Psoas muscle (tissue), 8 donors: ENCODE measurements at regions of chr13 and their contacts with region 1.

Region 1: DNA sequence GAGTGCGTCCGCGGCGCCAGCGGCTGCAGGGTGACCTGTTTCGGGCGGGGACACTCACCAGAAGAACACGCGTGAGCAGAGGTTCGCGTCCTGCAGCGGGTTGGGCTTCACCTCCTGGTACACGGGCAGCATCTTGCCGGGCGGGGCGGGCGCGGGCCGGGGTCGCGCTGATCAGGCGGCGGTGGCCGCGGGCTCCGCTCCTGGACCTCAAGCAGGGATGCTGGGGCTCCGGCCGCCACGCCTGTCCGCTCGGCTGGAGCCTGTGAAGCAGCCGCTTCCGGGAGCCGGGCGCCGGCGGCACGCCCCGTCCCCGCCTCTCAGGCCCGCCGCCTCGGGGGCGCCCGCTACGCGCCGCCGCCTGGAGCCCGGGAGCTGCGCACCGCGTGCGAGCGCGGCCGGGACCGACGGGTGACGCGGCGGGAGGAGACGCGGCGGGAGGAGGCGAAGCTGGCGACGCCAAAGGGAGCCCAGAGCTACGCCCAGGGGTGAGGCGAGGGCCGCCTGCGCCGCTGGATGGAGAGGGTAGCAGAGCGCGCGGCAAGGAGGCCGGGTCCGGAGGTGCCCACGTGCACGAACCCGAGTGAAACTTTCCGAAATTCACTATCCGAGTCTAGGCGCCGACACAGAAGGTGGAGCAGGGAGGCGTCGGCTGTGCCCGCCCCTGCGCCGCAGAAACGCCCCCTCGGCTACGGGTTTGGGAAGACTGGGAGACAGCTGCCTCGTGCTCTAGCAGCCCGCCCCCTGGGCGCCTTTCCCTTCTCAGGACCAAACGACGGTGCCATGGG is at the start of gene ABCC4:
- DNase-seq: peak; percentile 69 to 78
- ATAC-seq: peak; percentile 79 to 88 (median 84)
- H3K4me3 ChIP-seq: peak within 1 kb of the TSS; percentile 89
- H3K27ac ChIP-seq: peak within 1 kb of the TSS; percentile 90
- H3K4me1 ChIP-seq: peaks cover 38% of the 10 kb centered on the region
- H3K27me3 ChIP-seq: no peaks in the 10 kb centered on the region
- CTCF ChIP-seq: no peak
- total RNA-seq, gene ABCC4: 4.3 to 25.2 (median 6.6) TPM

Region 2: GRCh38 chr13:94305463-94305862 is 995.9 kb before region 1 on chr13:
- intact Hi-C with region 1: no loop called
- DNase-seq: no peak
- ATAC-seq: peak; percentile 44 to 68 (median 54)
- H3K4me3 ChIP-seq: no peak overlapping the region
- H3K27ac ChIP-seq: no peak overlapping the region
- H3K4me1 ChIP-seq: peaks cover 8% of the 10 kb centered on the region
- H3K27me3 ChIP-seq: no peaks in the 10 kb centered on the region
- CTCF ChIP-seq: no peak

Region 3: GRCh38 chr13:94683409-94683808 is 618.0 kb before region 1 on chr13:
- intact Hi-C with region 1: loop called in 1 of 2 experiments (anchors 10 kb)
- DNase-seq: no peak
- ATAC-seq: no peak
- H3K4me3 ChIP-seq: no peak overlapping the region
- H3K27ac ChIP-seq: no peak overlapping the region
- H3K4me1 ChIP-seq: no peaks in the 10 kb centered on the region
- H3K27me3 ChIP-seq: peaks cover 0 to 16% (median 1%) of the 10 kb centered on the region in 3 donors
- CTCF ChIP-seq: no peak

Region 4: DNA sequence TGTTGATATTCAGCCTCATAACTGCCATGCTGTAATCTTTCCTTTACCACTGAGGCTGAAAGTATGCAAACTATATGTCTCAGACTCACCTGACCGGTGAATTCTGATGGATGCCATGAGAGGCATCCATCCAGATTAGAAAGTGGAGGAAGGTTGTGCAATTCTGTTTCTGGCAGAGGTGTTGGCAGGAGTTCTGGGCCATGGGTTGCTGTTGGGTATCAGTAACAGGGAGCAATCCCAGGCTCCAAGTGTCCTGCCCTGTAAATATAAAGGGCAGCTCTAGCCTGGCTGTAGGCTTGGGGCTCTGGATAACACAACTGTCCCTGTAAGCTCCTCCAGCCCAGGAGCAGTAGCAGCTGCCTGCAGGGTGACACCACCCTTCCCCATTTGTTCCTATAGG is 77.2 kb after region 1 on chr13:
- intact Hi-C with region 1: loop called (anchors 1 to 5 kb)
- DNase-seq: peak; percentile 14 to 50
- ATAC-seq: peak; percentile 81 to 91 (median 83)
- H3K4me3 ChIP-seq: no peak overlapping the region
- H3K27ac ChIP-seq: peak overlapping the region; percentile 72
- H3K4me1 ChIP-seq: peaks cover 19% of the 10 kb centered on the region
- H3K27me3 ChIP-seq: no peaks in the 10 kb centered on the region
- CTCF ChIP-seq: no peak

Region 5: GRCh38 chr13:95403828-95404522 is 102.6 kb after region 1 on chr13:
- intact Hi-C with region 1: loop called in 1 of 2 experiments (anchors 1 kb)
- DNase-seq: peak; percentile 76 to 90
- ATAC-seq: peak; percentile 88 to 98 (median 92)
- H3K4me3 ChIP-seq: peak overlapping the region; percentile 57
- H3K27ac ChIP-seq: no peak overlapping the region
- H3K4me1 ChIP-seq: no peaks in the 10 kb centered on the region
- H3K27me3 ChIP-seq: no peaks in the 10 kb centered on the region
- CTCF ChIP-seq: peak; percentile 95

Region 6: GRCh38 chr13:95509521-95510310 is 208.3 kb after region 1 on chr13:
- intact Hi-C with region 1: no loop called
- DNase-seq: no peak
- ATAC-seq: no peak
- H3K4me3 ChIP-seq: no peak overlapping the region
- H3K27ac ChIP-seq: no peak overlapping the region
- H3K4me1 ChIP-seq: no peaks in the 10 kb centered on the region
- H3K27me3 ChIP-seq: no peaks in the 10 kb centered on the region
- CTCF ChIP-seq: no peak

Region 7: DNA sequence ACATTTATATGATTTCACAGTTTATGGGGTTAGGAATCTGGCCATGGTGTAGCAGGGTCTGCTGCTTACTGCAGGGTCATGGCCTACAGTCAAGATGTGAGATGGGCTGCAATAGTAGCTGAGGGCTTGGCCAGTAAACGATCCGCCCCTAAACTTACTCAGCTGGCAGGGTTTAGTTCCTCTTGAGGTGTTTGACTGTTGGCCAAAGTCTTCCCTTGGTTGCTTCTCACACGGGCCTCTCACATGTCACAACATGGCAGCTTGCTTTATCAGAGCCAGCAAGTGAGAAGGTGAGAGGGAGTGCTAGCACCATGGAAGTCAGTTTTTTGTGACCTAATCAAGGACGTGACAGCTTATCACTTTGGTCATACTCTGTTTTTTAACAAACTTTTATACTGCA is 452.7 kb after region 1 on chr13:
- intact Hi-C with region 1: no loop called
- DNase-seq: peak in 1 of 2 donors; percentile 47
- ATAC-seq: peak; percentile 54 to 93 (median 88)
- H3K4me3 ChIP-seq: no peak overlapping the region
- H3K27ac ChIP-seq: no peak overlapping the region
- H3K4me1 ChIP-seq: peaks cover 15% of the 10 kb centered on the region
- H3K27me3 ChIP-seq: no peaks in the 10 kb centered on the region
- CTCF ChIP-seq: no peak